Heart right ventricle (tissue), 16 donors: ENCODE measurements at regions of chr7 and their contacts with region 1.

Region 1: GRCh38 chr7:100478966-100479665 is at the start of gene TSC22D4:
- DNase-seq: peak; percentile 95 to 97
- ATAC-seq: peak; percentile 88 to 94 (median 92)
- H3K4me3 ChIP-seq: peak within 1 kb of the TSS; percentile 74 to 100 (median 98)
- H3K27ac ChIP-seq: peak within 1 kb of the TSS; percentile 87 to 100 (median 96)
- H3K4me1 ChIP-seq: peaks cover 10 to 61% (median 50%) of the 10 kb centered on the region in 9 donors
- H3K27me3 ChIP-seq: no peaks in the 10 kb centered on the region
- CTCF ChIP-seq: no peak
- total RNA-seq, gene TSC22D4: 36.0 to 72.3 (median 46.7) TPM

Region 2: DNA sequence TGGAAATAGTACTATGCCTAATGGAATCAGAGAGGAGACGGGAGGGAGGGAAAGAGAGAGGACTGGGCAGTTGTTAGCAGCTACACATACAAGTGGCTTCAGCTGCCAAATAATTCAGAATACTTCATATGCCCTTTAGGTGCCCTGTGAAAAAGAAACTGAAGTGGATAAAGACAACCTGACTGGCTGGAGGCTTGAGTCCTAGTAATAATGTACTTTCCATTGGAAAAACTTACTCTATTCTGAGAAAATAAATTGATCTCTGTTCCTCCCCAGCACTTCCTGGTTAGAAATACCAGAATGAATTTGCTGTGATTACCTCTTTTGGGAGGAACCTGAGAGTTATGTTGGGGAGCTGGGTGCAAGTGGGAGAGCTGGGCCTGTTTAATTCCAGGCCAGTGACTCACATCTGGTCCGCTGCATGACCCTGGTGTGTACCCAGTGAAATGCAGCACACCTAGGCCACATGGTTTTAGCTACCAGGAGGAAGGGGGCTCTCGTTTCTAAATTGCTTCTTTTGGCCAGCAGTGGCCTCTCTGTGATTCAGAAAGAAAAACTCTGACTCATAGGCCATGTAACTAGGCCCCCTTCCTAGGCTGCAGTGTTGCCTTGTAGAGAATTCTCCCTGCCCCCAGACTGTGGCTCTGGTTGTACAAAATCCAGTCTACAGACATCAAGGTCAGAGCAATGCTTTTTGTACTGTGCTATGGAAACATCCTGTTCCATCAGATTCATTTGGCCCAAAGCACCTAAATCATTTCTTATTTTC is 66.4 kb after region 1 on chr7:
- intact Hi-C with region 1: loop called in 2 of 10 experiments (anchors 5 kb)
- DNase-seq: peak in 1 of 2 donors; percentile 40
- ATAC-seq: peak; percentile 50 to 89 (median 78)
- H3K4me3 ChIP-seq: peak overlapping the region in 1 of 10 donors; percentile 0
- H3K27ac ChIP-seq: peak overlapping the region; percentile 63 to 94 (median 88)
- H3K4me1 ChIP-seq: peaks cover 23 to 75% (median 53%) of the 10 kb centered on the region in 9 donors
- H3K27me3 ChIP-seq: no peaks in the 10 kb centered on the region
- CTCF ChIP-seq: peak in 1 of 9 donors; percentile 11

Region 3: DNA sequence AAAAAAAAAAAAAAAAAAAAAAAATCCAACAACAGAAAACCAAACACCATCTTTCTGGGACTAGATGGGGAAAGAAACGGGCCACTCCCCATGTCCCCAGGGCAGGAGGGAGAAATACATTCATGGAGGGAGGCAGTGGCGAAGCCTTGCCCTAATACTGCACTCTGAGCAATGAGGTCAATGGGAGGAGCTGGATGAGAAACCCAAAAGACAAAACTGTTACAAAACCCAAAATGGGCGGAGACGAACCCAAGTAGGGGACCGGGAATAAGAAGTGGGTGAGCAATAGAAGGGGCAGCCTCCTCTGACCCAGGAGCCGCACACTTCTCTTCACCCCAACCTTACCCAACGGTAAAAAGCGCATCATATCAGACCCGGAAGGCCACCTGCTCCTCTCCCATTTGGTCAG is 201.1 kb after region 1 on chr7:
- intact Hi-C with region 1: loop called in 2 of 10 experiments (anchors 10 kb)
- DNase-seq: peak in 1 of 2 donors; percentile 48
- ATAC-seq: peak in 6 of 8 donors; percentile 7 to 41 (median 21)
- H3K4me3 ChIP-seq: no peak overlapping the region
- H3K27ac ChIP-seq: peak overlapping the region in 5 of 10 donors; percentile 4 to 55 (median 21)
- H3K4me1 ChIP-seq: peaks cover 0 to 49% (median 23%) of the 10 kb centered on the region in 9 donors
- H3K27me3 ChIP-seq: no peaks in the 10 kb centered on the region
- CTCF ChIP-seq: no peak

Region 4: GRCh38 chr7:100852048-100852872 is 373.1 kb after region 1 on chr7 and contains the start of gene SLC12A9:
- intact Hi-C with region 1: loop called in 1 of 10 experiments (anchors 10 kb)
- DNase-seq: peak; percentile 90 to 92
- ATAC-seq: peak; percentile 99 to 100 (median 99)
- H3K4me3 ChIP-seq: peak within 1 kb of the TSS; percentile 52 to 91 (median 72)
- H3K27ac ChIP-seq: peak within 1 kb of the TSS in 9 of 10 donors; percentile 54 to 90 (median 70)
- H3K4me1 ChIP-seq: peaks cover 8 to 21% (median 16%) of the 10 kb centered on the region in 9 donors
- H3K27me3 ChIP-seq: no peaks in the 10 kb centered on the region
- CTCF ChIP-seq: peak; percentile 76 to 99 (median 95)
- total RNA-seq, gene SLC12A9: 4.8 to 15.7 (median 6.9) TPM